ENCODE measurements at regions of chrX and their contacts with region 1.

Region 1: DNA sequence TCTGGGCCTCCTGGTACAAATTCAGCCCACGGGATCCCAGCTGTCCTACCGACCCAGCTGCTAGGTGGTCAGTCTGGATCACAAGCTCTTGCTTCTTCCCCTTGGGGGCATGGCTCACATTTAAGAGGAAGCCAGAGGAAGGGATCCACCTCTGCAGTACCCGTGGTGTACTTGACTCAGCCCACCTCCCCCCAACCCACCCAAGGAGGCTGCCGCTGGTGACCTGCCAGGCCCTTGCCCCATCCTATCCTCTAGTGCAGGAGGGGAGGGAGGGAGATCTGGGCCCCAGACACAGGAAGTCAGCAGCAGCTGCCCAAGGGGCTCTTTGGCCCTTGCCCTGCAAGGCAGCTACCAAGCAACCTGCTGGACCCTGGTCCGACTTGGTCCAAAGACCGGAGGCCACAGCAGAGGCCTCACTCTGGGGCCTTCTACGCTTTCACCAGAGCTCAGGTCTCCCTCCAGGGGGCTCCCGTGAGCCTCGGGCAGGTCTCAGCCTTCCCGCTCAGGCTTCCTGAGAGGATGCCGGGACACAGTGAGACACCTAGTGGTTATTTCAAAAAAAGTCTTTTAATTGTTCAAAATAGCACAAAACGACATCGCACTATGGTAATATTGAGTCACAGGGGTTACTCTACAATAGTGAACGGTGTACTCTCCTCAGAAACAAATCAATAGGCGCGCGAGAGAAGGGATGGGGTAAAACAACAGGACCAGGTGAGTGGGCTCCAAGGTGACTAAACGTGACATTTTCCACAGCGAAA is 2.7 kb upstream of the RENBP start:
- DNase-seq: peak; percentile 78 to 92 (median 87)
- H3K4me3 ChIP-seq: no peak overlapping the region
- H3K27ac ChIP-seq: no peak overlapping the region
- H3K4me1 ChIP-seq: peaks cover 0 to 61% (median 59%) of the 10 kb centered on the region in 4 experiments
- H3K27me3 ChIP-seq: peaks cover 0 to 14% (median 0%) of the 10 kb centered on the region in 5 experiments

Region 2: DNA sequence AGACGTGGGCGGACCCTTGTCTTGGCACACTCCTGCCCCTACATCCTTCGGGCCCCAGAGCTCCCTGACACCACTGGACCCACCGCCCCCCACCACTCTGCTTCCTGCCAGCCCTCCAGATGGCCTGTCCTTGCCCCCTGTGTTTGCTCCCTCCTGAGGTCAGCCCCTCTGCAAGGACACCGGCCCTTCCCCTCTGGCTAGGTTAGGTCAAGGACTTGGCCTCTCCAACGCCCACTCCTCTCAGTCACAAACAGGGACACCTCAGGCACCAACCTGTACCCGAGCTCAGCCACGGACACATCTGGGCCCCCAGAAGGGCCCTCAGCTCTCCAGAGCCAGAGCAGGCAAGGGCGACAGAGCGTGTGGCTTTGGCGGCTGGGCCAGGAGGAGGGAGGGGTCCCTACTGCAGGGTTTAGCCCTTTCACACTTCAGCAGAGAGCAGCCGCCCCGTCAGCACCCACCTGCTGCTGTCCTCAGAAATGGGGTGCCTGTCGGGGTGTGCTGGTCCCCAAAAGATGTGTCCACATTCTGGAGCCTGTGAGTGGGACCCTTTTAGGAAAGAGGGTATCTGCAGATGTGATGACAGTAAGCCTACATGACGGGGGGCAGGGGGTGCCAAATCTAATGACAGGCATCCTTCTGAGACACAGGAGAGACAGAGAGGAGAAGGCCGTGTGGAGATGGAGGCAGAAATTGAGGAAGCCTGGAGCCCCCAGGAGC is 323.7 kb before region 1 on chrX:
- CTCF ChIA-PET with region 1: no interaction called
- POLR2A ChIA-PET with region 1: no interaction called
- DNase-seq: no peak
- H3K4me3 ChIP-seq: no peak overlapping the region
- H3K27ac ChIP-seq: no peak overlapping the region
- H3K4me1 ChIP-seq: peaks cover 0 to 10% (median 4%) of the 10 kb centered on the region in 4 experiments
- H3K27me3 ChIP-seq: peaks cover 0 to 27% (median 0%) of the 10 kb centered on the region in 5 experiments

Region 3: GRCh38 chrX:153763989-153764755 is 183.0 kb before region 1 on chrX and contains the start of gene PLXNB3:
- CTCF ChIA-PET with region 1: interaction called, 11 read pairs
- POLR2A ChIA-PET with region 1: no interaction called
- DNase-seq: peak; percentile 44 to 66 (median 61)
- H3K4me3 ChIP-seq: no peak within 1 kb of the TSS
- H3K27ac ChIP-seq: peak within 1 kb of the TSS in 1 of 2 experiments; percentile 49
- H3K4me1 ChIP-seq: peaks cover 0 to 33% (median 25%) of the 10 kb centered on the region in 4 experiments
- H3K27me3 ChIP-seq: peaks cover 0 to 3% (median 0%) of the 10 kb centered on the region in 5 experiments

Region 4: DNA sequence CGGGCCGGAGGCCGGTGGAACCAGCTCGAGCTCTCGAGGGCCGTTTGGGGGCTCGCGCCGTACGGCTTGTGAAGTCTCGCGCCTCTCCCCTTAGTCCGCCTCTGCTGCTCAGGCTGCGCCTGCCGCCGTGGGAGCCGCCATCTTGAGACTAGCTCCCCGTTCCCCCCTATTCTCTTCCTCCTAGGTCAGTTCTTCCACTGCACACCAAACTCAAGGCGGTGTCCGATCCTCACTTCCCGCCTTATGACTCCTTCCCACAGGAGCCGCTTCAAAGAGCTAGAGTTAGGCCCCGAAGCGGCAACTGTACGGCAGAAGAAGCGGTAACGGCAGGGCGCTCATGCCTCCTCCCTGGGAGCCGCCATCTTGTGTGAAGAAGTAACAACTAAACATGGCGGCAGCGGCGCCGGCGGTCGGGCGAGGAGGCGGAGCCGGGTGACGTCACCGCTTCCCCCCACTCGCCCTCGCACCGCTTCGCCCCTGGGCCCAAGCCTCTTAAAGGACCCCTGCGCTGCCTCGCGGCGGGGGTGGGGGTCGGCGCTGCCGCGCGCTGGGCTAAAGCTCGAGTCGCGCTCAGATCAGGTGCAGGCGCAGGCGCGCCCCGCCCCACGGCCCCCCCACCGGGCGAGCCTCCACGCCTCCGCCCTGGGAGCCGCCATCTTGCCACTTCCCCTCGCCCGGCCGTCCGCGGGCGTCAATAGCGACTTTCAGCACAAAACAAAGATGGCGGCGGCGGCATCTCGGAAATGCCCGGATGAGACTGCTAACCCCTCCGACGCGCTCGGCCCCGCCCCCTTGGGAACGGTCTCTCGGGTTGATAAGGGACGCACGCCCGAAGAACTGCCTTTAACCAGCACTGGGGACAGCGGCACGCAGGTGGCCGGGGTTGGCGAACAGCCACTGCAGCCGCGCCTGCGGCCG is 24.5 kb after region 1 on chrX and contains the start of gene HCFC1:
- CTCF ChIA-PET with region 1: interaction called, 19 read pairs
- POLR2A ChIA-PET with region 1: no interaction called
- DNase-seq: peak; percentile 89 to 96 (median 95)
- H3K4me3 ChIP-seq: peak within 1 kb of the TSS; percentile 80 to 97 (median 93)
- H3K27ac ChIP-seq: peak within 1 kb of the TSS; percentile 98 to 99
- H3K4me1 ChIP-seq: peaks cover 13 to 53% (median 51%) of the 10 kb centered on the region in 4 experiments
- H3K27me3 ChIP-seq: peaks cover 0 to 22% (median 0%) of the 10 kb centered on the region in 5 experiments

Measured in common myeloid progenitor, CD34-positive (primary cell).